Caco-2 (cell line): ENCODE measurements at regions of chr1 and their contacts with region 1.

Region 1: DNA sequence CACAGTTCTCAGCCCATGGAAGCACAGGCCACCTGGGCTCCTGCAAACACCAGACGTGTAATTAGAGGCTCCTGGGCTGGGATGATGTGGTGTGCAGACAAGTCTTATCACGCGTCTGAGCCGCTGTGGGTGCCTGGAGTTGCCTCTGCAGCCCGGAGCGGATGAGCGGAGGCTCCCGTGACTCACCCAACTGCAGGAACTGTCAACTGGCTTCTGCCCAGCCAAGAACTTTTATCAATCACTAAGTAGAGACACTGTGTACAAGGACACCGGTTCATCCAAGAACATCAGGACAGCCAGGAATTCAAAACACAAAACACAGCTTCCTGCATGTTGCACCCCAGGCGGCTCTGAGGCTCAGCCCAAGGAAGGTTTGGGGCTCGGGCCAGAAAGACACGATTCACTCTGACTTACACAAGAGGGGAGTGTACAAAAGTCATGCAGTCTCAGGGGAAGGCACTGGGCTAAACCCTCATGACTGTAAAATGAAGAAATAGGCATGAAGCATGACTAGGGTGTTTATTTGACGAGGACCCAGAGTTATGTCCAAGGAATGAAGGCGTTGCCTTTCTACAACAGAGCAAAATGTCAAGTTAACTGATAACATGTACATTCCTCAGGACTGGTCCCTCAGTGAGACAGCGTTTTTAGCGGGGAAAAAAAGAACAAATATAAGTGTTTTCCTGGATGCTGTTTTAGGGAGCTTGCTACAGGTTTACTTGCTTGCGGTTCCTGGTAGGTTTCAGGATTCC is 21.1 kb downstream of the ERRFI1 start:
- DNase-seq: peak; percentile 78
- H3K4me3 ChIP-seq: peak overlapping the region; percentile 14; the same call in 1 of the 2 replicates
- H3K4me3 Mint-ChIP-seq: peak overlapping the region; percentile 65
- H3K27ac Mint-ChIP-seq: peak overlapping the region; percentile 93
- H3K4me1 ChIP-seq: peaks cover 28% of the 10 kb centered on the region
- H3K4me1 Mint-ChIP-seq: peaks cover 27% of the 10 kb centered on the region
- H3K27me3 ChIP-seq: no peaks in the 10 kb centered on the region
- H3K27me3 Mint-ChIP-seq: no peaks in the 10 kb centered on the region
- CTCF ChIP-seq: no peak

Region 2: DNA sequence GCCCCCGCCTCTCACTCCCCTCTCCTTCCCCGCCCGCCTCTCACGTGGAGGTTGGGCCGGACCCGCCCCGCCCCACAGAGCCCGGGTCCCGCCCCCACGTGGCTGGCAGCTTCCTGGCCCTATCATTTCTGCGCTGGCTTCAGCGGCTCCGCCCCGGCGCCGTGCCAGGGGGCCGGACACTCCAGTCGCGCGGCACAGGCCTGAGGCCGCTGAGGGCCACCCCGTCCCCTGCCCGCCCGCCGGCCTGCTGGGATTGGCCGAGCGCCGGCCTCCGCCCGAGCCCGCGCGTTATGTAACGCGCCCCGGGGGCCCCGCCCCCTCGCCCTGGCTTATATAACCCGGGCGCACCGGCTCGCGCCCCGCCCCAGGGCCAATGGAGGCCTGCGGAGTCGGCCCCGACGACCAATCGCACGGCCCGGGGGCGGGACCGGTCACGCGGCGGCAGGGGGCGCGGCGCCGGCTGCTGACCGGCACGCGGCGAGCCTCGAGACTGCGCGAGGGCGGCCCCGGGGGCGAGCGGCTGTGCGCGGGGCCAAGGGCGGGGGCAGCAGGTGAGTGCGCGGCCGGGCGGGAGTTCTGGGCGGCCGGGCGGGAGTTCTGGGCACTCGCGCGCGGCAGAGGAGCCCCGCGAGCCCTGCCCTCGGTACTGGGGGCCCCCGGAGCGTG is 221.0 kb before region 1 on chr1 and contains the start of gene PER3:
- CTCF ChIA-PET with region 1: no interaction called
- POLR2A ChIA-PET with region 1: no interaction called
- intact Hi-C with region 1: no loop called
- DNase-seq: peak; percentile 95 to 98
- H3K4me3 ChIP-seq: peak within 1 kb of the TSS; percentile 75
- H3K4me3 Mint-ChIP-seq: peak within 1 kb of the TSS; percentile 68
- H3K27ac Mint-ChIP-seq: no peak within 1 kb of the TSS
- H3K4me1 ChIP-seq: peaks cover 7% of the 10 kb centered on the region
- H3K4me1 Mint-ChIP-seq: peaks cover 18% of the 10 kb centered on the region
- H3K27me3 ChIP-seq: no peaks in the 10 kb centered on the region
- H3K27me3 Mint-ChIP-seq: no peaks in the 10 kb centered on the region
- CTCF ChIP-seq: no peak
- total RNA-seq, gene PER3: 24.4 and 27.4 TPM in 2 replicates

Region 3: GRCh38 chr1:7983086-7983778 is 21.7 kb before region 1 on chr1:
- CTCF ChIA-PET with region 1: no interaction called
- POLR2A ChIA-PET with region 1: no interaction called
- intact Hi-C with region 1: loop called (anchors 1 kb)
- DNase-seq: no peak
- H3K4me3 ChIP-seq: no peak overlapping the region
- H3K4me3 Mint-ChIP-seq: no peak overlapping the region
- H3K27ac Mint-ChIP-seq: no peak overlapping the region
- H3K4me1 ChIP-seq: peaks cover 11% of the 10 kb centered on the region; the same call in 1 of the 2 replicates
- H3K4me1 Mint-ChIP-seq: peaks cover 7% of the 10 kb centered on the region
- H3K27me3 ChIP-seq: no peaks in the 10 kb centered on the region
- H3K27me3 Mint-ChIP-seq: no peaks in the 10 kb centered on the region
- CTCF ChIP-seq: no peak

Region 4: GRCh38 chr1:8015036-8015808 is 10.2 kb after region 1 on chr1:
- CTCF ChIA-PET with region 1: interaction called, 11 read pairs
- POLR2A ChIA-PET with region 1: interaction called, 6 read pairs
- intact Hi-C with region 1: no loop called
- DNase-seq: peak in 1 of 2 experiments; percentile 65
- H3K4me3 ChIP-seq: no peak overlapping the region
- H3K4me3 Mint-ChIP-seq: no peak overlapping the region
- H3K27ac Mint-ChIP-seq: no peak overlapping the region
- H3K4me1 ChIP-seq: peaks cover 55% of the 10 kb centered on the region
- H3K4me1 Mint-ChIP-seq: peaks cover 46% of the 10 kb centered on the region
- H3K27me3 ChIP-seq: no peaks in the 10 kb centered on the region
- H3K27me3 Mint-ChIP-seq: no peaks in the 10 kb centered on the region
- CTCF ChIP-seq: peak; percentile 44 to 52

Region 5: GRCh38 chr1:8161546-8162105 is 156.6 kb after region 1 on chr1:
- CTCF ChIA-PET with region 1: no interaction called
- POLR2A ChIA-PET with region 1: no interaction called
- intact Hi-C with region 1: no loop called
- DNase-seq: no peak
- H3K4me3 ChIP-seq: no peak overlapping the region
- H3K4me3 Mint-ChIP-seq: no peak overlapping the region
- H3K27ac Mint-ChIP-seq: peak overlapping the region; percentile 19
- H3K4me1 ChIP-seq: no peaks in the 10 kb centered on the region; the same call in 1 of the 2 replicates
- H3K4me1 Mint-ChIP-seq: peaks cover 11% of the 10 kb centered on the region
- H3K27me3 ChIP-seq: no peaks in the 10 kb centered on the region
- H3K27me3 Mint-ChIP-seq: no peaks in the 10 kb centered on the region
- CTCF ChIP-seq: no peak

Region 6: GRCh38 chr1:8204823-8205222 is 199.8 kb after region 1 on chr1:
- CTCF ChIA-PET with region 1: no interaction called
- POLR2A ChIA-PET with region 1: interaction called, 11 read pairs
- intact Hi-C with region 1: no loop called
- DNase-seq: no peak
- H3K4me3 ChIP-seq: no peak overlapping the region
- H3K4me3 Mint-ChIP-seq: no peak overlapping the region
- H3K27ac Mint-ChIP-seq: peak overlapping the region; percentile 61
- H3K4me1 ChIP-seq: peaks cover 48% of the 10 kb centered on the region
- H3K4me1 Mint-ChIP-seq: peaks cover 23% of the 10 kb centered on the region
- H3K27me3 ChIP-seq: no peaks in the 10 kb centered on the region
- H3K27me3 Mint-ChIP-seq: no peaks in the 10 kb centered on the region
- CTCF ChIP-seq: no peak

Region 7: DNA sequence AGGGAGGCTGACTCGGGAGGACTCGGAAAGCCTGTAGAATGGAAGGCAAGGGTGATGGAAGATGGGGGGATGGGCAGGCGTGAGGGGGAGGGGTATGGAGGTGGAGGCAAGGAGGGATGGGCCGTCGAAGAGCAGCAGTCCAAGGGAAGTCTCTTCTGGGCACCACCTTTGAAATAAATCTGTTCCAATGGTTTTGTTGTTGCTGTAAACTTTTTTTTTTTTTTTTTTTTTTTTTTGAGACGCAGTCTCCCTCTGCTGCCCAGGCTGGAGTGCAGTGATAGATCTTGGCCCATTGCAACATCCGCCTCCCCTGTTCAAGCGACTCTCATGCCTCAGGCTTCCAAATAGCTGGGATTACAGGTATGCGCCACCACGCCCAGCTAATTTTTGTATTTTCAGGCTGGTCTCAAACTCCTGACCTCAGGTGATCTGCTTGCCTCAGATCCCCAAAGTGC is 233.9 kb after region 1 on chr1:
- CTCF ChIA-PET with region 1: no interaction called
- POLR2A ChIA-PET with region 1: no interaction called
- intact Hi-C with region 1: loop called (anchors 1 kb)
- DNase-seq: peak; percentile 73 to 85
- H3K4me3 ChIP-seq: no peak overlapping the region
- H3K4me3 Mint-ChIP-seq: peak overlapping the region; percentile 27
- H3K27ac Mint-ChIP-seq: peak overlapping the region; percentile 72
- H3K4me1 ChIP-seq: peaks cover 28% of the 10 kb centered on the region
- H3K4me1 Mint-ChIP-seq: peaks cover 27% of the 10 kb centered on the region
- H3K27me3 ChIP-seq: no peaks in the 10 kb centered on the region
- H3K27me3 Mint-ChIP-seq: no peaks in the 10 kb centered on the region
- CTCF ChIP-seq: no peak